MCF 10A (cell line): ENCODE measurements at regions of chr5 and their contacts with region 1.

Region 1: GRCh38 chr5:43313035-43313853 is at the start of gene HMGCS1:
- DNase-seq: peak; percentile 99
- H3K4me3 Mint-ChIP-seq: peak within 1 kb of the TSS; percentile 100
- H3K27ac Mint-ChIP-seq: peak within 1 kb of the TSS; percentile 96
- H3K4me1 Mint-ChIP-seq: peaks cover 53% of the 10 kb centered on the region
- H3K27me3 Mint-ChIP-seq: no peaks in the 10 kb centered on the region
- CTCF ChIP-seq: no peak
- total RNA-seq, gene HMGCS1: 36.2 and 42.6 TPM in 2 replicates

Region 2: DNA sequence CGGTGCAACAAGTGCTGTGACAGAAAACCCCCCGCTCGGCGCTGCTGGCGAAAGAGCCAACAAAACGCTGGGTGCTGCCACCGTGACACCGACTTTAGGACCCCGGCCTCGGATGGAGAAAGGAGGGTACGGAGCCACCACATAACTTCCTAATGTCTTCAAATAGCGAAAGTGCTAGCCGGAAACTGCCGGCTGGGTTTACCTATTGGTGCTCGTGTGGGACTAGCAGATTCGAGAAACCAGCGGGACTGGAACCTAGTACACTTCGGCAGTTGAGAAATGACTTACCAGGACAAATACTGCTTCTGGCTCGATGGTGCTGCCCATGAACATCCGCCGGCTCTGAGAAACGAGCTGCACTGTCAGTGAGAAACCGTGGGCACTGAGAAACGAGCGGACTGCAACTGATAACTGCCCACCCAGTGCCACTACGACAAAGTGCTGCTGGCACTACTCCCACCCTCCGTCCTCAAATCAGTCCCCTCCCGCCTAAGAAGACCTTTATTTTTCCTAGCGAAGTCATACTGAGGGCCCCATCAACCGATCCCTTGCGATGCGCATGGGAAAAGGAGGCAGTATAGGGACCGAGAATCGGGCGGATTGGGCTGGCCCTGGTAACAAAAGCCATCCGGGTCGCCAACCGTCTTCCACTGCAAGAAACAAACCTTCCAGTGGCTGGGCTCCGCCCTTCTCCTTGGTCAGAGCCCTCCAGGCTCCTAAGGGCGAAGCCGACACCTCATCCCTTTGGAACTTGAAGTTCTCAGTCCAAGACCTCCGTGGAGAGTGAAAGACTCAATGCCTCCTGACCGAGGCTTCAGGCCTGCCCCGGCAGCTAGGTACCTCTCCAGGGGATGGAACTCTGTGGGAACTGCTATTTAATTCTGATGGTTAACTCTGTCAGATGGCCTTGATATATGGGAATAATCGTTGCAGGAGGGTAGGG is 246.2 kb before region 1 on chr5:
- CTCF ChIA-PET with region 1: no interaction called
- POLR2A ChIA-PET with region 1: interaction called, 39 read pairs
- intact Hi-C with region 1: no loop called
- DNase-seq: peak; percentile 91
- H3K4me3 Mint-ChIP-seq: peak overlapping the region; percentile 99
- H3K27ac Mint-ChIP-seq: peak overlapping the region; percentile 93
- H3K4me1 Mint-ChIP-seq: peaks cover 12% of the 10 kb centered on the region
- H3K27me3 Mint-ChIP-seq: no peaks in the 10 kb centered on the region
- CTCF ChIP-seq: no peak

Region 3: GRCh38 chr5:43191740-43192557 is 121.3 kb before region 1 on chr5 and contains the start of gene NIM1K:
- CTCF ChIA-PET with region 1: no interaction called
- POLR2A ChIA-PET with region 1: interaction called, 11 read pairs
- intact Hi-C with region 1: no loop called
- DNase-seq: no peak
- H3K4me3 Mint-ChIP-seq: peak within 1 kb of the TSS; percentile 79
- H3K27ac Mint-ChIP-seq: peak within 1 kb of the TSS; percentile 75
- H3K4me1 Mint-ChIP-seq: no peaks in the 10 kb centered on the region
- H3K27me3 Mint-ChIP-seq: peaks cover 10% of the 10 kb centered on the region
- CTCF ChIP-seq: no peak
- total RNA-seq, gene NIM1K: not detected in 2 replicates

Region 4: DNA sequence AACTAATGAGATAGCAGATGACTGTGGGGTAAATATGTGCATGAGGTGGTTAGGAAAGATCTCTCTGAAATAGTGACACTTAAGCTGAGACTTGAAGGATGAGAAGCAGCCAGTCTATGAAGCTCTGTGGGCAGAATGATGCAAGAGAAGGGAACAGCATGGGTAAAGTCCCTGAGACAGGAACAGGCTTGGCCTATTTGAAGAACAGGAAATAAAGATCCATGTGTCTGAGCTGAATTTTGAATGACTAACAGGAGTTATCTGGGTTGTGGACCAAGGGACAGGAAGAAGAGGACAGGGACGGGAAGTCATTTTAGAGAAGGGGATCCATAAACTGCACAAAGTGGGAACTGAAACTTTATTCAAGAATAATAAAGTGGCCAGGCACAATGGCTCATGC is 25.6 kb after region 1 on chr5:
- CTCF ChIA-PET with region 1: no interaction called
- POLR2A ChIA-PET with region 1: no interaction called
- intact Hi-C with region 1: no loop called
- DNase-seq: no peak
- H3K4me3 Mint-ChIP-seq: no peak overlapping the region
- H3K27ac Mint-ChIP-seq: no peak overlapping the region
- H3K4me1 Mint-ChIP-seq: no peaks in the 10 kb centered on the region
- H3K27me3 Mint-ChIP-seq: no peaks in the 10 kb centered on the region
- CTCF ChIP-seq: no peak

Region 5: GRCh38 chr5:43363445-43364152 is 50.4 kb after region 1 on chr5:
- CTCF ChIA-PET with region 1: interaction called, 3 read pairs
- POLR2A ChIA-PET with region 1: interaction called, 34 read pairs
- intact Hi-C with region 1: no loop called
- DNase-seq: peak; percentile 26
- H3K4me3 Mint-ChIP-seq: no peak overlapping the region
- H3K27ac Mint-ChIP-seq: peak overlapping the region; percentile 75
- H3K4me1 Mint-ChIP-seq: peaks cover 6% of the 10 kb centered on the region
- H3K27me3 Mint-ChIP-seq: no peaks in the 10 kb centered on the region
- CTCF ChIP-seq: no peak

Region 6: DNA sequence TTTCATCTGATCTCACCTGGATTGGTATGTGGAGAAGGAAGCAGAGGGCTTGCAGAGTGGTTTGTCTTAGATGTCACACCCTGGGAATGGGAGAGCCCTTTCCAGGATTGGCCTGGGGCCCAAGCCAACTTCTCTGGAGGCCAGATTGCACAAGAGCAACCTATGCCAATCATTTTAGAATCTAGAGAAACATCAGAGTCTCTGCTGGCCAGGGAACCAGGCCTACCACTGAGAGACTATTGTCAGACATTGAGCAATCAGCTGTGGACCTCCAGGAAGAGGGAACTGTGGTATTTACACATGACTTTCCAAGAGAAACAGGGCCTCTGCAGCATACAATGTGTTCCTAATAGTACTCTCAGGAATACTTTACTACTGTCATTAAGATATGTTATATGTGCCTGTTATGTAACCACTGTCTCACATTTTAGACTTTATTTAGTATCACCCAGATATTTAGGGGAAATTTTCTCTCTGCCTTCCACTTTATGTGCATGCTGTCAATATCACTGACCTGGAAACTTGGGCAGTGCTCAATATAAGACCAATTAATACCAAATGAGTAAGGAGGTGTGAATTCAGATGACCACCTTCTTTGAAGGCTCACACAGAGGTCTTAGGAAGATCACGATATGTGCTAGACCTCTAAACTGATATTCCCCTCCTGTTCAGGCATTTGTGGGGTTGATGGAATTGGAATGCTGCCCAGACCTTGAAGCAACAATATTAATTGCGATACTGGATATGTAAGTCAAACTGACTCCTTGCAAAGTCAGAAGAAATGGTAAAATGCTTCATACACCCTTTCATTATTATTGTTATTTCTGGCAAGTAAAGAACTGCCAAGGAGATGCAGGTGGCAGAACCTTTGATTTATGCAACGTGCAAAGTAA is 119.5 kb after region 1 on chr5:
- CTCF ChIA-PET with region 1: no interaction called
- POLR2A ChIA-PET with region 1: interaction called, 10 read pairs
- intact Hi-C with region 1: no loop called
- DNase-seq: peak; percentile 99
- H3K4me3 Mint-ChIP-seq: peak overlapping the region; percentile 28
- H3K27ac Mint-ChIP-seq: peak overlapping the region; percentile 53
- H3K4me1 Mint-ChIP-seq: peaks cover 43% of the 10 kb centered on the region
- H3K27me3 Mint-ChIP-seq: no peaks in the 10 kb centered on the region
- CTCF ChIP-seq: no peak

Region 7: DNA sequence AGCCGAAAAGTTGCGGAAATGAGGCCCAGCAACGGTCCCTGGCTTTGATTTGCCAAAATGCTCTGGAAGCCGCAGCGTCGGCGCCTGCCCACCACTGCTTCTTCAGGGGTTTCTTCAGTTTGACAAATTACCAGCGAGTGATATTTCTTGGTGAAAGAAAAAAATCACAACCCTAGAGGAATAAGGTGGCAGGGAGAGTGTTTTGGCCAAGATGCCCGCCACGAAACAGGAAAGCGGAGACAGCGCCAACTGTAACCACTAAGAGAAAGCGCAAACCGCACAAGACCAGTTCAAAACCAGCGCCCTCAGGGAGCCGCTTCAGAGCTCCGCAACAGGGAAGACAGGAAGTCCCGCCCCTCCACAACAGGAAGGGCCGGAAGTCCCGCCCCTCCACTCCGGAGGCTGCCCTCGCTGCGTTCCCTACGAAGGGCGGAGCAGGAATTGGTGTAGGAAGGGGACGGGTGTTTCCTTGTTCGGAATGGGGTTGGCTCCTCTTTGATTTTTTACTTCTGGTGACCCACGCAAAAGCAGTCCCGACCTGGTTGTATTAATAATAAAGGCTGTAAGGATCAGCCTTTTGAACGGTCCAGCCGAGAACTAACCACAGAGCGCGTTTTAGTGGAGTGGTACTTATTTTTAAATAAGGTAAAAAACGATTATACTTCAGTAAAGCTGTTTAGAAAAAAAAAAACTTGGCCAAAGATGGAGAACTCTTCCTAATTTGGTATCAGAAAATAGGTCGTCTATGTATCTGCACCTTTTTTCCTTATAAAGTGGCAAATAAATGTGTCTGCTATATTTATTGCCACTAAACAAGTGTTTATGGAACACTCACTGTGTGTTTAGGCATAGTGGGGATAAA is 201.8 kb after region 1 on chr5 and contains the start of gene C5orf34:
- CTCF ChIA-PET with region 1: no interaction called
- POLR2A ChIA-PET with region 1: interaction called, 11 read pairs
- intact Hi-C with region 1: no loop called
- DNase-seq: peak; percentile 97
- H3K4me3 Mint-ChIP-seq: peak within 1 kb of the TSS; percentile 80
- H3K27ac Mint-ChIP-seq: peak within 1 kb of the TSS; percentile 90
- H3K4me1 Mint-ChIP-seq: peaks cover 21% of the 10 kb centered on the region
- H3K27me3 Mint-ChIP-seq: no peaks in the 10 kb centered on the region
- CTCF ChIP-seq: no peak
- total RNA-seq, gene C5orf34: 3.9 and 5.9 TPM in 2 replicates

Region 8: DNA sequence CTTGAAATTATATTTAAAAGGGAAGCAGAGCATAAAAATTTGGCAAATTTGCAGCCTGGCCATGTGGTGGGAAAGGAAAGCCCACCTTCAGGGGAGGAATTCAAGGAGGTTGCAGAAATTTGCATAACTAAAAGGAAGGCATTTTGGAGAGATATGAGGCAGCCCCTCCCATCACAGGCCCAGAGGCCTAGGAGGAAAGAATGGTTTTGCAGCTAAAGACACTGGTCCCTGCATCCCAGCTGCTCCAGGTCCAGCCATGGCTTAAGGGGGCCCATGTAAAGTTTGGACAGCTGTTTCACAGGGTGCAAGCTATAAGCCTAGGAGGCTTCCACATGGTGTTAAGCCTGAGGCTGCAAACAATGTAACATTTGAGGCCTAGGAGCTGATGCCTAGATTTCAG is 502.3 kb after region 1 on chr5:
- CTCF ChIA-PET with region 1: no interaction called
- POLR2A ChIA-PET with region 1: no interaction called
- intact Hi-C with region 1: no loop called
- DNase-seq: no peak
- H3K4me3 Mint-ChIP-seq: no peak overlapping the region
- H3K27ac Mint-ChIP-seq: no peak overlapping the region
- H3K4me1 Mint-ChIP-seq: no peaks in the 10 kb centered on the region
- H3K27me3 Mint-ChIP-seq: no peaks in the 10 kb centered on the region
- CTCF ChIP-seq: no peak

Region 9: DNA sequence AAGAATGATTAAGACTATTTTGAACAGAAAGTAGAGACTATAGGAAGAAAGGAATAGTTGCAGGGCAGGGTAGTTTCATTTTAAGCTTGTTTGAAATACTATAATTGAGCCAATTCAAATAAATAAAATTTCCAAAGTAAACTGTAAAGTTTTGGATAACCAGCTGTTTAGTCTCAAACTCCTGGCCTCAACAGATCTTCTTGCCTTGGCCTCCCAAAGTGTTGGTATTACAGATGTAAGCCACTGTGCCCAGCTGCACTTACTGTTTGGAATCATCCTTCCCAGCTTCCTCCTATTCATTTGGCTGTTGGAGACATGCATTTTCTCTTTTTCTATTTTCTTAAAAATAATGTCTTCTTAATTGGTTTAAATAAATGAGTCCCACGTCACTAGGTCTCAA is 520.7 kb after region 1 on chr5:
- CTCF ChIA-PET with region 1: no interaction called
- POLR2A ChIA-PET with region 1: no interaction called
- intact Hi-C with region 1: no loop called
- DNase-seq: no peak
- H3K4me3 Mint-ChIP-seq: no peak overlapping the region
- H3K27ac Mint-ChIP-seq: no peak overlapping the region
- H3K4me1 Mint-ChIP-seq: peaks cover 11% of the 10 kb centered on the region
- H3K27me3 Mint-ChIP-seq: no peaks in the 10 kb centered on the region
- CTCF ChIP-seq: no peak